ENCODE measurements at regions of chr2 and their contacts with region 1.

Region 1: DNA sequence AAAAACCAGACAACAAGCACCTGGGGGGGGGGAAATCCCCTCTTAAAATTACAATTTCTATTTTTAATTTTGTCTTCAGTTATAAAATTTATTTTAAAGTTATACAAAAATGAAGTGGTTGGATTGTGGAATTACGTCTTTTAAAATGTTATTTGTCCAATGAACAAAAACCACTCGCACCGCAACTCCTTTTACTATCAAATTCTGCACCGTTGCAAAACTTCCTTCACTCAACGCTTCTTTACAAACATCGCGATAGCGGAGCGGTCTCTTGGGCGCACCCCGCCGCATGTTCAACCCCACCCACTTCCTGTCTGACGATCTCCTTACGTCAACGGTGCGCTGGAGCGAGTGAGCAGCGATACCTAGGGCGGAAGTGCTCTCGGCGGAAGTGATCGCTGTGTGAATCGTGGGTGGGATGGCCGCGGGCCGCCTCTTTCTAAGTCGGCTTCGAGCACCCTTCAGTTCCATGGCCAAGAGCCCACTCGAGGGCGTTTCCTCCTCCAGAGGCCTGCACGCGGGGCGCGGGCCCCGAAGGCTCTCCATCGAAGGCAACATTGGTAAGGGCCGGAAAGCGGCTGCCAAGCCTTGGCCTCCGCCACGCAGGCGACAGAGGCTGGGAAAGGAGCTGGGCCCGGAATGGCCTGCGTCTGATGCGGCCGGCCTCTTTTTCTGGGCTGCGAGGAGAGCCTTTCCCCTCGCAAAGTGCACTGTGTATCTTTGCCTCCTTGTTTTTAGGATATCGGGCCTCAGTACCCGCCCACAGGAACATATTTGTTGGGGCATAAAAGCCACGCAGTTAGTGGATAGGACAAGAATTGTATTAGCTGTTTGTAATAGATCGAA is at the start of gene DGUOK:
- DNase-seq: peak; percentile 100
- H3K4me3 ChIP-seq: peak within 1 kb of the TSS; percentile 66 to 94 (median 74)
- H3K27ac ChIP-seq: peak within 1 kb of the TSS; percentile 92 to 97 (median 93)
- H3K4me1 ChIP-seq: peaks cover 29 to 51% (median 47%) of the 10 kb centered on the region in 4 donors
- H3K27me3 ChIP-seq: no peaks in the 10 kb centered on the region
- CTCF ChIP-seq: peak in 1 of 3 experiments; percentile 11
- EP300 ChIP-seq: no peak
- POLR2A ChIP-seq: peak; percentile 81
- total RNA-seq, gene DGUOK: 31.6 to 50.7 (median 36.6) TPM

Region 2: GRCh38 chr2:73828818-73829570 is 97.7 kb before region 1 on chr2 and contains the start of gene STAMBP:
- intact Hi-C with region 1: loop called (anchors 10 kb)
- DNase-seq: peak; percentile 99
- H3K4me3 ChIP-seq: peak within 1 kb of the TSS; percentile 69 to 87 (median 82)
- H3K27ac ChIP-seq: peak within 1 kb of the TSS; percentile 93 to 98 (median 96)
- H3K4me1 ChIP-seq: peaks cover 9 to 64% (median 59%) of the 10 kb centered on the region in 4 donors
- H3K27me3 ChIP-seq: no peaks in the 10 kb centered on the region
- CTCF ChIP-seq: no peak
- EP300 ChIP-seq: no peak
- POLR2A ChIP-seq: peak; percentile 76
- total RNA-seq, gene STAMBP: 32.3 to 73.8 (median 34.1) TPM

Region 3: DNA sequence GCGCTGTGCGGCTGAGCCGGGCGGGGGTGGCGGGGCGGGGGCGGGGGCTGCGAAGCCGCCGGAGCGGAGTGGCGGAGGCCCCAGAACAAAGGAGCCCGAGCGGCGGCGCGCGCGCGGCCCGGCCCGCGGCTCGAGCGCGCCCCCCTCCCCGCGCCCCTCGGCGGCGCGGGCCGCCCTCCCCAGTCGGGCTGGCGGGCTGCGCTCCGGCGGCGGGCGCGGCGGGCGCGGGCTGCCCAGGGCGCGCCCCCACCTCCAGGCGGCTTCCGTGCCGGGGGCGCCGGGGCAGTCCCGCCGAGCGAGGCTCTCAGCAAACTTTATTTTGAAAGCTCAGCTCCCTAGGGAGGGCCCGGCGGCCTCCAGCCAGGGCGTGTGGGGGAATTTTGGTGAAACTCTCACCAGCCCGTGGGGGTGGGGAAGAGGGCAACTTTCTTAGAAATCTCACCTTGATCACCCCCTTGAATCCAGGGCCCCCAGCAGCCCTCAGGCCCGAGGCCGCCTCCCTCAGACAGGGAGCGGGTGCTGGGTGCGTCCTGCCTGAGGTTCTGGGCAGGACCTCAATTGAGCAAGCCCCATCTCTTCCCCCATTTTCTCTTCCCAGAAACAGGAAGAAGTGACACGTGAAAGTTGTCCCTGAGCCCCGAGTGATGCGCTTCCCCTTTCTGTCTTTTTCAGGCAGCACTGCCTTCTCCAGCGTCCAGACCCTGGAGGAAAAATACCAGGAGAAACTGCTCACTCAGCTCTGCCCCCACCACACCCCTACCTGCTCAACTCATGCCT is 58.8 kb after region 1 on chr2:
- intact Hi-C with region 1: loop called (anchors 5 kb)
- DNase-seq: no peak
- H3K4me3 ChIP-seq: peak overlapping the region; percentile 59 to 76 (median 66)
- H3K27ac ChIP-seq: peak overlapping the region; percentile 52 to 71 (median 64)
- H3K4me1 ChIP-seq: peaks cover 58 to 66% (median 65%) of the 10 kb centered on the region in 4 donors
- H3K27me3 ChIP-seq: no peaks in the 10 kb centered on the region
- CTCF ChIP-seq: no peak
- EP300 ChIP-seq: no peak
- POLR2A ChIP-seq: peak; percentile 19

Region 4: GRCh38 chr2:74002487-74003391 is 76.0 kb after region 1 on chr2:
- intact Hi-C with region 1: loop called (anchors 5 kb)
- DNase-seq: no peak
- H3K4me3 ChIP-seq: peak overlapping the region; percentile 60 to 79 (median 62)
- H3K27ac ChIP-seq: peak overlapping the region; percentile 59 to 77 (median 72)
- H3K4me1 ChIP-seq: peaks cover 45 to 78% (median 61%) of the 10 kb centered on the region in 4 donors
- H3K27me3 ChIP-seq: no peaks in the 10 kb centered on the region
- CTCF ChIP-seq: peak in 2 of 3 experiments; percentile 24
- EP300 ChIP-seq: no peak
- POLR2A ChIP-seq: no peak

Region 5: DNA sequence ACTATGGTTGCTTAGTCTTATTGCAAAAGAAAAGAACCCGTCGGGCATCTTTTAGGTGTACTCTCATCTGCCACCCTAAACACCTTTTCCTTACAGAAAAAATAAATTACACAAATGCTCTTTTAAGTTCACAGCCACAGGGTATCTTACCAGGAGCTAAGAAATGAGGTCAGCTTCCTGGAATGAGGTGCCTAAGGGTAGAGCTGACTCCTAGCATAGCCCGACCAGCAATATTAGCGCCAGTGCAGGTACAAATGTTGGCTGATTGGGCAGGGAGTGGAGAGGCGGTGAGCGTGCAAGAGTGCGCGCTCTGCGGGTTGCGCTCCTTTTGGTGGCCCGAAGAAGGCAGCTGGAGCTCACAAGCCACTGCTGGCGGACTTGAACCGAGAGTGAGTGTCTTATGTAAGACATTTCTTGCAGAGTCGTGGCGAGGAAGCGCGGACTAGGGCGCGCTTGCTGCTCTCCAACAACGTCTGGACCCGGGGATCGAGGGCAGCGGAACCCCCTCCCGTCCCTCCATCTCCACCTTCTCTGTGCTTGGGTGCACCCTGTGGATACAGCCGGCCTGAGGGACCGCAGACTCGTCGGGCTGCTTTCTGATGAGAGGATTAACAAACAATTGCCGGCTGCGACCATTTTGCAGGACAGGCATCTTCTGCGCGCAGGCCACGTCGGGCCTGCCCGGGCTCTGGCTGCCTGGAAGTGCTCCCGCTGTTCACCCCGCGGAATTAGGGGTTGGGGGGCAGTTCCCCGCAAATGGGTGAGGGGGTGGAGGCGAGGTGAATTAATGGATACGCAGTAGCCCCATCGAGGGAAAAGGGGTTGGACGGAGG is 203.7 kb after region 1 on chr2:
- intact Hi-C with region 1: no loop called
- DNase-seq: no peak
- H3K4me3 ChIP-seq: no peak overlapping the region
- H3K27ac ChIP-seq: no peak overlapping the region
- H3K4me1 ChIP-seq: no peaks in the 10 kb centered on the region
- H3K27me3 ChIP-seq: peaks cover 0 to 24% (median 2%) of the 10 kb centered on the region in 4 donors
- CTCF ChIP-seq: no peak
- EP300 ChIP-seq: no peak
- POLR2A ChIP-seq: no peak

Region 6: DNA sequence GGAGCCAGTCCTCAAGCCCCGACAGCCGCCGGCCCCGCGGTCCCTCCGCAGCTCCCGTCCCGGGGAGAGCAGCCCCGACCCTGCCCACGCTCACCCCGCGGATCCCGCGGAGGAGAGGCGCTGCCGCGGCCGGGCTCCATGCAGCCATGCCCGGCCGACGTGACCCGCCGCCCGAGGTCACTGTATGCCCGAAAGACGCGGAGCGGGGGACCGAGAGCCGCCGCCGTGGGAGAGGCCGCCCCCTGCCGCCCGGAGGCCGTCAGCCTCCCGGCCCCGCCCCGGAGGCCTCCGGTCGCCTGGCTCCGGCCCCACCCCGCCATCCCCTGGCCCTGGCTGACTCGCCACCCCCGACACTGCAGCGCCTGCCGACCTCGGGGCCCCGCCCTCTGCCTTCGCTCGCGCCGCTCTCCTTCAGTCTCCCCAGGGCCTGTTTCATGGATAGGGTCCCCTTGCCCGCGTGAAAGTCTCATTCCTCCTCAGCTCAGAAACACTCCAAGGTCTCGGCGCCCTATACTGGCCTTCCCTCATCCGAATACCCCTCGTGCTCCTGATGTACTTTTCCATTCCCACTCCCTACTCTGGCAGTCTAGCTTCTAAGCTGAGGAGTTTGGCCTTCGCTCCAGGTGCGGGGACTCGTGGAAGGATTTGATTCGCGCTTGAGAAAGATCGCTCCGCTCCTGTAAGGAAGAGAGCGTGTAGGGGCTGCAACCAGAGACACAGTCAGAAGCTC is 221.2 kb after region 1 on chr2 and contains the start of gene BOLA3:
- intact Hi-C with region 1: loop called (anchors 10 kb)
- DNase-seq: peak; percentile 93
- H3K4me3 ChIP-seq: peak within 1 kb of the TSS; percentile 86 to 89 (median 87)
- H3K27ac ChIP-seq: peak within 1 kb of the TSS; percentile 80 to 83 (median 80)
- H3K4me1 ChIP-seq: peaks cover 15 to 41% (median 24%) of the 10 kb centered on the region in 4 donors
- H3K27me3 ChIP-seq: no peaks in the 10 kb centered on the region
- CTCF ChIP-seq: peak; percentile 77 to 88 (median 77)
- EP300 ChIP-seq: no peak
- POLR2A ChIP-seq: no peak
- total RNA-seq, gene BOLA3: 29.4 to 46.9 (median 42.8) TPM

Measured in esophagus muscularis mucosa (tissue), 4 donors.